IMR-90 (cell line): ENCODE measurements at regions of chr1 and their contacts with region 1.

Region 1: DNA sequence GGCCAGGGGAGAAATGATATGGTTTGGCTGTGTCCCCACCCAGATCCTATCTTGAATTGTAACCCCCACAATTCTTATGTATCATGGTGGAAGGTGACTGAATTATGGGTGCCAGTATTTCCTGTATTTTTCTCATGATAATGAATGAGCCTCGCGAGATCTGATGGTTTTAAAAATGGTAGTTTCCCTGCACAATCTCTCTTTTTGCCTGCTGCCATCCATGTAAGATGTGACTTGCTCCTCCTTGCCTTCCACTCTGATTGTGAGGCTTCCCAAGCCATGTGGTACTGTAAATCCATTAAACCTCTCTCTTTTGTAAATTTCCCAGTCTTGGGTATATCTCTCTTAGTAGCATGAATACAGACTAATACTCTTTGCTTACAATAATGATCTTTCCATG is 1453.9 kb upstream of the B3GALT2 start:
- DNase-seq: no peak
- ATAC-seq: no peak
- H3K4me3 ChIP-seq: no peak overlapping the region
- H3K27ac ChIP-seq: no peak overlapping the region
- H3K4me1 ChIP-seq: no peaks in the 10 kb centered on the region
- H3K27me3 ChIP-seq: no peaks in the 10 kb centered on the region
- CTCF ChIP-seq: no peak
- POLR2A ChIP-seq: no peak
- RAD21 ChIP-seq: no peak

Region 2: DNA sequence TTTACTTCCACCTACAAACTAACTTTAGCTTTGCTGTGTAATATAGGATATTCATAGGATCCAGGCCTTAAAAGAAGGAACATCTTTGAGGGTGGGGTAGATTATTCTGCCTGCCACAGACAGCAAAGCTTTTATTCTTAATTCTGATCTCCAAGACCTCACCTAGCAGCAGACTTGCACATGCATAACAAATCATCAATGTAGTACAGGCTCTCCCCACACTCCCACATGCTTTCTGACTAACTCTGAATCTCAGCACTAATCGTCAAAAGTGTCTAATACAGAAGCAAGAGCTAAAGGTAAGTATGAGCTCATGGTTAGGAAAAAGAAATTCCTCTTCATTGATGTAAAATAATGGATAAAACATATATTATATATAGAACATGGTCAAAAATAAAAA is 14.6 kb after region 1 on chr1:
- CTCF ChIA-PET with region 1: no interaction called
- POLR2A ChIA-PET with region 1: no interaction called
- dilution Hi-C with region 1: no loop called
- in situ Hi-C with region 1: no loop called
- intact Hi-C with region 1: loop called (anchors 2 kb)
- DNase-seq: no peak
- ATAC-seq: no peak
- H3K4me3 ChIP-seq: no peak overlapping the region
- H3K27ac ChIP-seq: no peak overlapping the region
- H3K4me1 ChIP-seq: no peaks in the 10 kb centered on the region
- H3K27me3 ChIP-seq: no peaks in the 10 kb centered on the region
- CTCF ChIP-seq: no peak
- POLR2A ChIP-seq: no peak
- RAD21 ChIP-seq: no peak